Ovary (tissue), 10 donors: ENCODE measurements at regions of chr2 and their contacts with region 1.

Region 1: DNA sequence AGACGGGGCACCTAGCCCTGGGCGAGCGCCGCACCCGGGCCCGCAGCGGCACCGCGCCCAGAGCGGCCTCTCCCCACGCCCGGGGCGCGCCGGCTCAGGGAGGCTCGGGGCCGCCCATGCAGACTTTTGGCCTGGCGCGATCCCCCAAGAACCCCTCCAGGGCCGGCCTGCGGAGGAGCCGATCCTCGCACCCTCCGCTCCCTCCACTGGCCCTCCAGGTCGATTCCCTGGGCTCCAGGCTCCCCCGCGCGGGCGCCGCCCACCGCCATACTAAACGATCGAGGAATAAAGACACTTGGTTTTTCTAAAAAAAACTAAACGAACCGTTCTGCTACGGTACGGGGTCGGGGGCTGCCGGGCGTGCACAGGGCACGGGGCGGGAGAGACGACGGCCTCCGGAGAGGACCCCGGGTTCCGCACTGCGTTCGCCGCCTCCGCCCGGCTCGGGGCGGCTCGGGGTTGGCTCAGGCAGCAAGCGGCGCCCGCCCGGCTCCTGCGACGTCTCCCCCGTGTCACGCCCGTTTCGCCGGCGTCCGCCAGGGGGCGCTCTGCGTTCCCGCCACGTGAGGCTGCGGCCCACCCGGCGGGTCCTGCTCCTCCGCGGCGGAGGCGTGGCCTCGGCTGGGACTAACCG is 365 bp upstream of the KHK start:
- DNase-seq: peak; percentile 93 to 98 (median 95)
- H3K4me3 ChIP-seq: peak overlapping the region; percentile 61
- H3K27ac ChIP-seq: peak overlapping the region; percentile 59 to 70
- H3K4me1 ChIP-seq: peaks cover 8% of the 10 kb centered on the region
- H3K27me3 ChIP-seq: no peaks in the 10 kb centered on the region
- CTCF ChIP-seq: peak; percentile 73 to 97 (median 97)
- EP300 ChIP-seq: no peak
- POLR2A ChIP-seq: peak; percentile 43

Region 2: DNA sequence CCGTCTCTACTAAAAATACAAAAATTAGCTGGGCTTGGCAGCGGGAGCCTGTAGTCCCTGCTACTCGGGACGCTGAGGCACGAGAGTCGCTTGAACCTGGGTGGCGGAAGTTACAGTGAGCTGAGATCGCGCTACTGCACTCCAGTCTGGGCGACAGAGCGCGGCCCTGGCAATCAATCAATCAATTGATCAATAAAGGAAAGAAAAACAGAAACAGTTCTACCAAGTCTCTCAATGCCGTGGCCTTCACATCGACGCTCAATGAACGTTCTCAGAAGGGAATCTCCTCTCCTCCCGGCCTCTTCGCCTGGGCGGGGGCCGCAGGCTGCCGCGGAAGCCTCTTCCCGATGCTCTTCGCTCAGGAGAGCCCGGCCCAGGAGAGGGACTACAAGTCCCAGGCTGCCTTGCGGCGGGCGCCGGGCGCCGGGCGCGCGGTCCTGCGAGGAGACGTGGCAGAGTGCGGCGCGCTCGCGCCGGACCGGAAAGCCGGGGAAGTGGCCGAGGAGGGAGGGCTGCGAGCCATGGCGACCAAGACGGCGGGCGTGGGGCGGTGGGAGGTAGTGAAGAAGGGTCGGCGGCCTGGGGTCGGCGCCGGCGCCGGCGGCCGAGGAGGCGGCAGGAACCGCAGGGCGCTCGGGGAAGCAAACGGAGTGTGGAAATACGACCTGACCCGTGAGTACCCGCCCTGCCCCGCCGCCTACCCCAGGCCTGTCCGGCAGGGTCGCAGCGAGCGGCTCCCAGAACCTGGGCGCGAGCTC is 53.5 kb before region 1 on chr2 and contains the start of gene TMEM214:
- intact Hi-C with region 1: loop called in 2 of 4 experiments (anchors 10 kb)
- DNase-seq: peak; percentile 85 to 93 (median 88)
- H3K4me3 ChIP-seq: peak within 1 kb of the TSS; percentile 86
- H3K27ac ChIP-seq: peak within 1 kb of the TSS; percentile 64 to 72
- H3K4me1 ChIP-seq: peaks cover 2% of the 10 kb centered on the region
- H3K27me3 ChIP-seq: no peaks in the 10 kb centered on the region
- CTCF ChIP-seq: peak in 1 of 3 donors; percentile 8
- EP300 ChIP-seq: no peak
- POLR2A ChIP-seq: peak; percentile 73
- total RNA-seq, gene TMEM214: 26.5 to 101 (median 73.9) TPM

Region 3: DNA sequence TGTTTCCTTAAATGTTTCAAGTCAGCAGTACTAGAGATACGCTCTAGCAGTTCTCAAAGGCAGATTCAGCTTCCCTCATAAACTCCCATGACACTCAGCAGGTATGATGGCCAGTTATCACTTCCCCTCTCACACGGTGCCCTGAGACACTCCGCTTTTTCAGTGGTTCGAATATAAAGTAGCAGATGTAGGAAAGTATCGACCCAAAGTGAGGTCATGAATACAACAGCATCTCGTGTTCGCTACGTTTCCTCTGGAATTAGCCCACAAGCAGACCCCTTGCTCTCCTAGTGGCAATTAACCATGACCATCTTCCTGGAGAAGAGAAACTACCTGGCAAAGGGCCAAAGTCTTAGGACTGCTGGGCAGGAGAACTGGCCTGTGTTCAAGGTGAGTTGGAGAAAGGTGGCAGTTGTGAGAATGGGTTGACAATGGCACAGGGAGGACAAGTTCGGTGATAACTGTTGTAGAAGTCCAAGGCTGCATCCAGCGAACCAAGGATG is 44.0 kb before region 1 on chr2:
- intact Hi-C with region 1: loop called in 3 of 4 experiments (anchors 5 to 10 kb)
- DNase-seq: no peak
- H3K4me3 ChIP-seq: no peak overlapping the region
- H3K27ac ChIP-seq: no peak overlapping the region
- H3K4me1 ChIP-seq: no peaks in the 10 kb centered on the region
- H3K27me3 ChIP-seq: no peaks in the 10 kb centered on the region
- CTCF ChIP-seq: no peak
- EP300 ChIP-seq: no peak
- POLR2A ChIP-seq: no peak

Region 4: DNA sequence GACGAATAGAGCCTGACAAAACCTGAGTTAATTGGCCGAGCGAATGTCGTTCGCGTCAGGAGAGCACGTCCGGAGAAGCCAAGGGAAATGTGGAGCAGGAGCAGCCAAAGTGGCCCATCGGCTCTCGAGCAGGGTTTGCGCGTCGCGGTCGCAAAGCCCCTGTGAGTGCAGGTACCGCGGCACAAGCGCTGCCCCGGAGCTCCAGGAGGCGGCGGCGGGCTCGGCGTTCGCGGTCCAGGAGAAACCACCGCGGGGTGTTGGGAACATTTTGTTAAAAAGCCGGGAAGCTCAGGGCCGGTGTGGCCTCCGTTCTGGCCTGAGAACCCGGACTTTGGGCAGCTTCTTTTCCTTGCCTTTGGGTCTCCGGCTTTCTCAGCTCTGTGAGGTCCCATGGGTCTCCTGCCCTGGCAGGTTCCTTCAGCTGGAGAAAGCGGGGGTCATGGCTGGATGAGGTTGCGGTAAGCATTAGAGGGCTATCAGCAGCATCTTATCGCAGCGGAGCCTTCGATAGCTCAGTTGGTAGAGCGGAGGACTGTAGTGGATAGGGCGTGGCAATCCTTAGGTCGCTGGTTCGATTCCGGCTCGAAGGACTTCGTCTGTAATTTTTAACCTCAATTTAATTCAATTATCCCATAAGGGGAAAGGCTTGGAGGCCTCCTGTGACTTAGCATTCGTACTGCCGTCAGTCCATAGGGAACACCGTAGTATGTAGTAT is 35.8 kb before region 1 on chr2:
- intact Hi-C with region 1: loop called in 2 of 4 experiments (anchors 5 kb)
- DNase-seq: peak; percentile 90 to 95 (median 94)
- H3K4me3 ChIP-seq: peak overlapping the region; percentile 93
- H3K27ac ChIP-seq: peak overlapping the region; percentile 74 to 87
- H3K4me1 ChIP-seq: peaks cover 5% of the 10 kb centered on the region
- H3K27me3 ChIP-seq: no peaks in the 10 kb centered on the region
- CTCF ChIP-seq: peak in 2 of 3 donors; percentile 66 to 82
- EP300 ChIP-seq: no peak
- POLR2A ChIP-seq: no peak

Region 5: DNA sequence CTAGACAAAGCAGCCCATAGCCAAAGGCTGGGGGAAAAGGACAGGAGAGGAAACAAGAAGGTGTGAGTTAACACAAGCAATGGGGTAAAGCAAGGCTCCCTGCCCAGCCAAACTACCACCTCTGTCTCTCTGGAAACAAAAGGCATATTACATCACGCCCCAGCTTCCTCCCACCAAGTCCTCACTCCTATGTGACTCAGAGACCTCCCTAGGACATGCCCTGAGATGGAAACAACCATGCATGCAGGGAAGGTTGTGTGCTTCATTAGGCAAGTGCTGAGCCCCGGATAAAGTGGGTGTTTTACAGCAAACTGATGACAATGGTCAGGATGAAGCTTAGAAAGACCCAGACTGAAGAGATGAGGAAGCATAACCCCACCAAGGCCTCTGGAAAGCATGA is 116.6 kb after region 1 on chr2:
- intact Hi-C with region 1: no loop called
- DNase-seq: no peak
- H3K4me3 ChIP-seq: no peak overlapping the region
- H3K27ac ChIP-seq: no peak overlapping the region
- H3K4me1 ChIP-seq: peaks cover 2% of the 10 kb centered on the region
- H3K27me3 ChIP-seq: no peaks in the 10 kb centered on the region
- CTCF ChIP-seq: no peak
- EP300 ChIP-seq: no peak
- POLR2A ChIP-seq: no peak